ENCODE measurements at regions of chr3 and their contacts with region 1.

Region 1: GRCh38 chr3:156509189-156510174 is 45.4 kb downstream of the SSR3 start:
- DNase-seq: no peak
- H3K4me3 ChIP-seq: no peak overlapping the region
- H3K27ac ChIP-seq: no peak overlapping the region
- H3K4me1 ChIP-seq: no peaks in the 10 kb centered on the region
- H3K27me3 ChIP-seq: no peaks in the 10 kb centered on the region
- CTCF ChIP-seq: peak; percentile 56 to 66 (median 59)

Region 2: DNA sequence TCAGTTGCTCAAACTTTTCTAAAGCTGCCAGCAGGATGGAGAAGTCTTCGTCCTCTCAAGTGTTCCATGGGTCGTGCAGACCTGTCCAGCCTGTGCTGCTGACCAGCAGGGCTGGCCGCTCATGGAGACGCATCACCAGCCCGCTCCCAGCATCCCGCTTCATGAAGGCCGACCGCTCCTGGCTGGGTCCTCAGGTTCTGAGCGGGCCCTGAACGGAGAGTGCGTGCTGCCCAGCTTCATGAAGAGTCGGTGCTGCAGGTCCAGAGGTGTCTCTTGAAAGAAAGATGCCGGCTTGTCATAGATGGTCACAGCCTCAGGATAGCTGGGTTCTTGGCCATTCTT is 464.9 kb before region 1 on chr3:
- intact Hi-C with region 1: loop called (anchors 2 kb)
- DNase-seq: no peak
- H3K4me3 ChIP-seq: no peak overlapping the region
- H3K27ac ChIP-seq: no peak overlapping the region
- H3K4me1 ChIP-seq: peaks cover 0 to 3% of the 10 kb centered on the region in 2 donors
- H3K27me3 ChIP-seq: no peaks in the 10 kb centered on the region
- CTCF ChIP-seq: no peak

Region 3: DNA sequence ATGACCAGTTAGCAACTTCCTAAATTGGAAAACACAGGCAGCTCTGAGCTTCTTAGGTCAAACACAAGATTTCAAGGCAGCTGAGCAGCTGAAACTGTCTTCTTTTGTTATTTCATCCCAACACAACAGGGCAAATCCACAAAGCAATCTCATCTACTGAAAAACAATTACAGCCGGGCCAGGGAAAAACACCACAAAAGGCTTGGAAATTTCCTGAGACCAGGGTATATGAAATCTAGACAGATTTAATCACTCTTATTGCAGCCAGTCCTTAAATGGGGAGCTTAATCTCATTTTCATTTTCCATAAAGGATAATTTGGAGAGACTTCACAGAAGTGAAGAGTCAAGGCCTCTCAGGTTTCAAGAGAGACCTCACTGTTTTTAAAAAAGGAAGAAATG is 136.4 kb before region 1 on chr3:
- intact Hi-C with region 1: no loop called
- DNase-seq: no peak
- H3K4me3 ChIP-seq: no peak overlapping the region
- H3K27ac ChIP-seq: no peak overlapping the region
- H3K4me1 ChIP-seq: no peaks in the 10 kb centered on the region
- H3K27me3 ChIP-seq: no peaks in the 10 kb centered on the region
- CTCF ChIP-seq: no peak

Region 4: DNA sequence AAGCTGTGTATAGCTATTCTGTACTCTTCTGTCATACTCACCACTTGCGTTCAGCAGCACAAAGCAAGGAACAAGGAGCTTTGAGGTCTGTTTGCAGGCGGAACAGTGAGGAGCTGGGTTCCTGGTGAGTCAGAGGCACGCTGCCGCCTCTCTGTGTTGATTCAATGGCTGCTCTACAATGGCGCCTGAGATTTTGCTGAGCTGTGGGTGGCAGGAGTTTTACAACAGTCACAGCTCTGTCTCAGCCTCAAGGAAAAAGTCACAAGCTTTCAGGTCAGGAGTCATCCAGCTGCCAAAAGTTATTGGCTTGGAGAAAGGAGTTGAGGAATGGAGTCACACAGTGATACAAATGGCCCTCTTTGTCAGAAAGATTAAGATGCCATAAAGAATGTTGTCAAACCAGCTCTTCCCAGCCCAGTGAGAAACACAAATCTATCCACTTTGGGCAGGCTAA is 52.7 kb before region 1 on chr3:
- intact Hi-C with region 1: loop called (anchors 5 kb)
- DNase-seq: peak in 1 of 2 donors; percentile 67
- H3K4me3 ChIP-seq: no peak overlapping the region
- H3K27ac ChIP-seq: peak overlapping the region in 1 of 2 donors; percentile 29
- H3K4me1 ChIP-seq: peaks cover 6 to 21% of the 10 kb centered on the region in 2 donors
- H3K27me3 ChIP-seq: no peaks in the 10 kb centered on the region
- CTCF ChIP-seq: no peak